ENCODE measurements at regions of chr5 and their contacts with region 1.

Region 1: GRCh38 chr5:88819301-88819999 is 63.5 kb downstream of the MEF2C start:
- DNase-seq: no peak
- ATAC-seq: peak; percentile 35
- H3K4me3 ChIP-seq: peak overlapping the region; percentile 67
- H3K27ac ChIP-seq: peak overlapping the region; percentile 86
- H3K4me1 ChIP-seq: peaks cover 23% of the 10 kb centered on the region
- H3K27me3 ChIP-seq: no peaks in the 10 kb centered on the region
- CTCF ChIP-seq: no peak
- EP300 ChIP-seq: no peak
- POLR2A ChIP-seq: no peak
- RAD21 ChIP-seq: no peak

Region 2: GRCh38 chr5:87137283-87137682 is 1682.2 kb before region 1 on chr5:
- CTCF ChIA-PET with region 1: no interaction called
- POLR2A ChIA-PET with region 1: no interaction called
- RAD21 ChIA-PET with region 1: no interaction called
- SMC1A ChIA-PET with region 1: no interaction called
- in situ Hi-C with region 1: no loop called
- intact Hi-C with region 1: no loop called
- DNase-seq: no peak
- ATAC-seq: no peak
- H3K4me3 ChIP-seq: no peak overlapping the region
- H3K27ac ChIP-seq: no peak overlapping the region
- H3K4me1 ChIP-seq: no peaks in the 10 kb centered on the region
- H3K27me3 ChIP-seq: no peaks in the 10 kb centered on the region
- CTCF ChIP-seq: no peak
- EP300 ChIP-seq: no peak
- POLR2A ChIP-seq: no peak
- RAD21 ChIP-seq: no peak

Region 3: GRCh38 chr5:88746438-88746882 is 73.0 kb before region 1 on chr5:
- CTCF ChIA-PET with region 1: interaction called, 4 read pairs
- POLR2A ChIA-PET with region 1: interaction called, 3 read pairs
- RAD21 ChIA-PET with region 1: interaction called, 594 read pairs
- SMC1A ChIA-PET with region 1: interaction called, 591 read pairs
- in situ Hi-C with region 1: no loop called
- intact Hi-C with region 1: no loop called
- DNase-seq: peak; percentile 76
- ATAC-seq: peak; percentile 87
- H3K4me3 ChIP-seq: no peak overlapping the region
- H3K27ac ChIP-seq: peak overlapping the region; percentile 76
- H3K4me1 ChIP-seq: peaks cover 23% of the 10 kb centered on the region; the same call in 1 of the 2 replicates
- H3K27me3 ChIP-seq: no peaks in the 10 kb centered on the region
- CTCF ChIP-seq: no peak
- EP300 ChIP-seq: no peak
- POLR2A ChIP-seq: no peak
- RAD21 ChIP-seq: no peak

Region 4: GRCh38 chr5:88808153-88808552 is 11.3 kb before region 1 on chr5:
- CTCF ChIA-PET with region 1: interaction called, 14 read pairs
- POLR2A ChIA-PET with region 1: interaction called, 5 read pairs
- RAD21 ChIA-PET with region 1: interaction called, 49 read pairs
- SMC1A ChIA-PET with region 1: interaction called, 31 read pairs
- in situ Hi-C with region 1: no loop called
- intact Hi-C with region 1: no loop called
- DNase-seq: no peak
- ATAC-seq: peak; percentile 59
- H3K4me3 ChIP-seq: no peak overlapping the region
- H3K27ac ChIP-seq: no peak overlapping the region
- H3K4me1 ChIP-seq: peaks cover 12% of the 10 kb centered on the region
- H3K27me3 ChIP-seq: no peaks in the 10 kb centered on the region
- CTCF ChIP-seq: no peak
- EP300 ChIP-seq: no peak
- POLR2A ChIP-seq: no peak
- RAD21 ChIP-seq: no peak

Region 5: DNA sequence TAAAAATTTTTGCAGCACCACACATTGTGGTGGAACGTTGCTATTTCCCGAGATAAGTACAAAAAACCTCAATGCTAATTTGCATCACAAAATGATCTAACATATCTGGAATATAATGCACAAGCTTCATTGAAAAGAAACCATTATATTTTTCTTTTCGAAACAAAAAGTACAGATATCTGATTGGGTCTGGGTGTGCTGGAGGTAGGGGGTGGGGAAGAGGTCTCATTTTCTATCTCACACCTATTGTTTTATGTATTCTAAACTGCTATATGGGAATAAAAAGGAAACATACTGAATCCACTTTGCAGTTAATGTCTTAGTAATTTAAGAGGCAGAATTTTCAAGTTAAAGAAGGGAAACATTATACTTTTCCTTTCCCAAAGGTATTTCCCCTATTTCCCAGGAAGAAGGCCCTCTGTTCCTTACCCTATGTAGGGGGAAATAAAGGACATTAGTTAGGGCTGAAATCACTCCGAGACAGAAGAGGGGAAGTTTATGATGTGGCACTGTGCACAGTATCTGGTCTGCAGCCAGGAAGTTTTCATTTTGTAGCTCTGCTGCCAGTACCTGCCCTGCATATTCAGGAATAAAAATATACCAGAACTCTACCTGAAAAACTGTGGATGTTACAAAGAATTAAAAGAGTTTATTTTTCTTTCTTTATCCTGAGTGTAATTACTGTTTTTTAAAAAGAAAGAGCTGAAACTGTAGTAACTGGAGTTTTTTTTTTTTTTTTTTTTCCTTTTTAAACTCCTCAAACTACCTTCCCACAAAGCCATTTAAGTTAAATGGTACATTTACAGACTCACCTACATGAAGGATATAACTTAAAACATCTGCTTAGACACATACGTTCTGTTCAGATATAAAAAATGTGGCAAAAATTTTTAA is 56.1 kb after region 1 on chr5:
- CTCF ChIA-PET with region 1: interaction called, 4 read pairs
- POLR2A ChIA-PET with region 1: interaction called, 9 read pairs
- RAD21 ChIA-PET with region 1: interaction called, 82 read pairs
- SMC1A ChIA-PET with region 1: interaction called, 182 read pairs
- in situ Hi-C with region 1: no loop called
- intact Hi-C with region 1: no loop called
- DNase-seq: no peak
- ATAC-seq: peak; percentile 65
- H3K4me3 ChIP-seq: peak overlapping the region; percentile 65
- H3K27ac ChIP-seq: peak overlapping the region; percentile 67
- H3K4me1 ChIP-seq: no peaks in the 10 kb centered on the region
- H3K27me3 ChIP-seq: no peaks in the 10 kb centered on the region
- CTCF ChIP-seq: no peak
- EP300 ChIP-seq: no peak
- POLR2A ChIP-seq: peak; percentile 22; the same call in 1 of the 2 replicates
- RAD21 ChIP-seq: no peak

Region 6: DNA sequence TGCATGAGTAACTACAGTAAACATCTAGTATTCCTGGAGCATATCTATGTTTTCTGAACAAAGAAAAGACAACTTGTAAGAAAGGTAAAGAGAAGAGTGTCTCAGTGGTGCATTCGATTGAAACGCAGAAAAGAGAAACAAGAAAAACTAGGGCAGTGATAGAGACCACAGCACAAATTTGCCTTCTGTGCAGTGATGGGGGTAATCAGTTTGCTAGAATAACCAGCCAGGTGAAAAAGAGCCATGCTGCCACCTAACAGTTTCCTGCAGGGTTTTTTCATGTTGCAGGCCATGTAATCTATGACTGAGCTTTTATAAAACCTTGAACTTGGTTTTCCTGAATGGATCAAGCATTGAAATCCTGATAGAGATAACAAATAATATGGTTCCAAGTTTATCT is 261.9 kb after region 1 on chr5:
- CTCF ChIA-PET with region 1: interaction called, 3 read pairs
- POLR2A ChIA-PET with region 1: no interaction called
- RAD21 ChIA-PET with region 1: interaction called, 8 read pairs
- SMC1A ChIA-PET with region 1: interaction called, 12 read pairs
- in situ Hi-C with region 1: no loop called
- intact Hi-C with region 1: no loop called
- DNase-seq: peak; percentile 62
- ATAC-seq: peak; percentile 89
- H3K4me3 ChIP-seq: peak overlapping the region; percentile 3; the same call in 1 of the 2 replicates
- H3K27ac ChIP-seq: peak overlapping the region; percentile 55
- H3K4me1 ChIP-seq: peaks cover 11% of the 10 kb centered on the region
- H3K27me3 ChIP-seq: no peaks in the 10 kb centered on the region
- CTCF ChIP-seq: peak in 1 of 3 experiments; percentile 36; a peak in 2 of 6 replicates
- EP300 ChIP-seq: 0 out of 4 replicates have a peak, but pooled peaks of 1 of the 2 experiments have one; percentile 21
- POLR2A ChIP-seq: no peak
- RAD21 ChIP-seq: peak; percentile 54